MCF 10A (cell line): ENCODE measurements at regions of chr14 and their contacts with region 1.

Region 1: GRCh38 chr14:77290741-77291140 is 19.7 kb upstream of the NGB start:
- DNase-seq: no peak
- H3K4me3 Mint-ChIP-seq: no peak overlapping the region
- H3K27ac Mint-ChIP-seq: no peak overlapping the region
- H3K4me1 Mint-ChIP-seq: no peaks in the 10 kb centered on the region
- H3K27me3 Mint-ChIP-seq: no peaks in the 10 kb centered on the region
- CTCF ChIP-seq: no peak

Region 2: DNA sequence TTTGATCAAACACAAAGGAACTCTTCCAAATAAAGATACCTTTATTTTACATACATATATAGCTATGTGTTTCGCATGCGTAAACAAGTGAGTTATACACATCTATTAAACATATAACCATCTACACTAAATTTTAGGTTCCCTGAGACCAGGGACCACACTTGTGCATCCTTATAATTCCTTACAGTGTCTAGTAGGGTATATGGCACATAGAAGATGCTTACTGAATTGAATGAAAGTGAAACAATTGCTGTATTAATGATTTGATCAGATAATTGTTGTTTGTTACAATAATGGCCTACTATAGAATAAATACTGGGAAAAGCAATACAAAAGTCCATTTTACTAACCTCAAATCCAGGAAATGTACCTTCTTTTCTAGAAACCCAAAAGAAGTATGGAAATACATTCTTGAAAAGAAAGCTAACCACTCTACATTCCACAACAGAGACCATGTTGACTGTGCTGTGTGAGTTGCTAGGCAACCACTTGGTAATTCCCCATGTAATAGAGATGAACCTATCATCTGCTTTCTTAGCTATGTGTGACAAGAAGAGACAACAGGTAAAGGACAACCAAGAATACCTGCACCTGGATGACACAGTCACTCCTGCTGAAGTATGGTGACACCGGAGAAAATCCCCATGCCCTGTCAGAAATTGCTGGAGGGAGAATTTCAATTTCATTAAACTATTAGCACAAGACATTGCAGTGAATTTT is 204.6 kb before region 1 on chr14:
- CTCF ChIA-PET with region 1: no interaction called
- POLR2A ChIA-PET with region 1: no interaction called
- intact Hi-C with region 1: no loop called
- DNase-seq: no peak
- H3K4me3 Mint-ChIP-seq: no peak overlapping the region
- H3K27ac Mint-ChIP-seq: no peak overlapping the region
- H3K4me1 Mint-ChIP-seq: peaks cover 6% of the 10 kb centered on the region
- H3K27me3 Mint-ChIP-seq: no peaks in the 10 kb centered on the region
- CTCF ChIP-seq: no peak

Region 3: DNA sequence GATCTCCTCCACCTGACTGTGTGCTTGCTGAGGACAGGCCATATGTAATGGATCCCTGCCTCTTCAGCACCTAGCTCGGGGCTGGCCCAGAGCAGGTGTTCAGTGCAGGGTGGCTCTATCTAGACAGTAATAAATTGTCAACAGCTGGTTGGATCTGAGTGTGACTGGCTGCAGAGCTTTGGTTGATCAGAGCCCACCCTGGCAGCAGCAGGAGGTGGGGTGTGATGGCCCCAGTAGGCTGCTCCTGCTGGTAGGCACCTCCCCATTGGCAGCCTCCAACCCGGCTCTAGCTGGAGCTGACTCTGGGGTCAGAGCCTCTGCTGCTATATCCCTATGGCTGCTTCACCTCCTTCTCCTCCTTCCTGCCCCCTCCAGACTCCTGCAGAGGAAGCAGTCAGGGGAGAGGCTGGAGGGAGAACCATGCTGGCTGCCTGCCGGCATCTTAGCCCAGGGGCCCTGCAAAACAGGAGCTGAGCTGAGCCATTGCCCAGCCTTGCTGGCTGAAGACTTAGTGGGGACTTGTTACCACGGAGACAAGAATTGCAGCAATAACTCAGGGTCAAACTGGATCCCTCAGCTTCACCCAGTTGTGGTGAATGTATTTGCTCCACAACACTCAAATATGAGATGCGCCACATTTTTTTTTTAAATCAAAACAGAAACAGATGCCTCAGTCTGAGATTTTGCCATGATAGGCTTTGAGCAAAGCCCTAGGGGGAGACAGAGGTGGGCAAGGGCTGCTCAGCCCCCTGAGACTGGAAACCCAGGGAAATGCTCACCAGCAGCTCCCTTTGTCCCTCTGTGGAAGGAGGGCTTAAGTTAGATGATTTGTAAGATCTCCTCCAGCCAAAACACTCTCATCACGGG is 86.9 kb before region 1 on chr14:
- CTCF ChIA-PET with region 1: no interaction called
- POLR2A ChIA-PET with region 1: no interaction called
- intact Hi-C with region 1: no loop called
- DNase-seq: no peak
- H3K4me3 Mint-ChIP-seq: no peak overlapping the region
- H3K27ac Mint-ChIP-seq: no peak overlapping the region
- H3K4me1 Mint-ChIP-seq: no peaks in the 10 kb centered on the region
- H3K27me3 Mint-ChIP-seq: no peaks in the 10 kb centered on the region
- CTCF ChIP-seq: no peak

Region 4: DNA sequence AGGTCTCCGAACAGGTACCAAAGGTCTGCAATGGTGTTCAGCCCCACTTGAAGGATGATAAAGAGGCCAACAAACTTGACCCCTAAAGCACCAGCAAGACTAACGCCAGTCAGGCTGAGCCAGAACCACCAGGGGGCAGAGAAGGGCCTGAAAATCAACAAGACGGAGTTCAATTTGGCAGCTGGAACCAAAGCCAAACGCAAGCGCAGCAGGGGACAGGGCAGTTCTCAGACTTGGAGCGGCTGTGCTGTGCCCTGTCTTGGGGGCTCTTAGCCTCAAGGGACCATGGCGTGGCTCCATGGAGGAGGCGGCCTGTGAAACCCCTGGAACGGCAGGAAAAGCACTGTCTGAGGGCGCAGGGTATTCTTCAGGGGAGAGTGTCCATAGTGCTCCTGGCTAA is 10.4 kb after region 1 on chr14:
- CTCF ChIA-PET with region 1: interaction called, 19 read pairs
- POLR2A ChIA-PET with region 1: interaction called, 5 read pairs
- intact Hi-C with region 1: no loop called
- DNase-seq: peak; percentile 75
- H3K4me3 Mint-ChIP-seq: no peak overlapping the region
- H3K27ac Mint-ChIP-seq: no peak overlapping the region
- H3K4me1 Mint-ChIP-seq: peaks cover 24% of the 10 kb centered on the region
- H3K27me3 Mint-ChIP-seq: no peaks in the 10 kb centered on the region
- CTCF ChIP-seq: peak; percentile 83

Region 5: DNA sequence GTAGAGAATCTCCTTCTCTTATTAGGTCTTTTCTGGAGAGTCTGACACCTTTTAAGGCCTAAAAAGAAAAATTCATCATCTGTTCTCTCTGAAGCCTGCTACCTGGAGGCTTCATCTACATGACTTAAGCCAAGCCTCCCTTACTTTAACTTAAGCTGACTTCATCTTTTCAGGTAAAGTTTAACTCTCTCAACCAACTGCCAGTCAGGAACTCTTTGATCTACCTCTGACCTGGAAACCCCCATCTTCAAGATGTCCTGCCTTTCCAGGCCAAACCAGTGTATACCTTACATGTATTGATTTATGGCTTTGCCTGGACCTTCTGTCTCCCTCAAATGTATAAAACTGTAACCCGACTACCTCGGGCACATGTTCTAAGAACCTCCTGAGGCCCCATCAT is 47.6 kb after region 1 on chr14:
- CTCF ChIA-PET with region 1: no interaction called
- POLR2A ChIA-PET with region 1: no interaction called
- intact Hi-C with region 1: no loop called
- DNase-seq: no peak
- H3K4me3 Mint-ChIP-seq: no peak overlapping the region
- H3K27ac Mint-ChIP-seq: no peak overlapping the region
- H3K4me1 Mint-ChIP-seq: peaks cover 9% of the 10 kb centered on the region
- H3K27me3 Mint-ChIP-seq: no peaks in the 10 kb centered on the region
- CTCF ChIP-seq: no peak